Tibial artery (tissue), 4 donors: ENCODE measurements at regions of chr16 and their contacts with region 1.

Region 1: GRCh38 chr16:2429034-2429770 is at the start of gene CCNF:
- DNase-seq: peak; percentile 96 to 98
- H3K4me3 ChIP-seq: peak within 1 kb of the TSS; percentile 63 to 96
- H3K27ac ChIP-seq: peak within 1 kb of the TSS; percentile 73 to 75
- H3K4me1 ChIP-seq: peaks cover 0 to 16% (median 13%) of the 10 kb centered on the region in 4 donors
- H3K27me3 ChIP-seq: no peaks in the 10 kb centered on the region
- CTCF ChIP-seq: peak in 1 of 2 experiments; percentile 26

Region 2: GRCh38 chr16:2500918-2501750 is 71.9 kb after region 1 on chr16:
- intact Hi-C with region 1: loop called (anchors 5 kb)
- DNase-seq: peak; percentile 79 to 87
- H3K4me3 ChIP-seq: peak overlapping the region in 1 of 2 donors; percentile 35
- H3K27ac ChIP-seq: no peak overlapping the region
- H3K4me1 ChIP-seq: peaks cover 0 to 59% (median 19%) of the 10 kb centered on the region in 4 donors
- H3K27me3 ChIP-seq: no peaks in the 10 kb centered on the region
- CTCF ChIP-seq: peak; percentile 98 to 99